CD8-positive, alpha-beta memory T cell (primary cell): ENCODE measurements at regions of chr3 and their contacts with region 1.

Region 1: GRCh38 chr3:38117748-38118420 is 19.0 kb downstream of the ACAA1 start:
- DNase-seq: peak; percentile 51 to 80 (median 57)
- H3K4me3 ChIP-seq: no peak overlapping the region
- H3K4me3 Mint-ChIP-seq: no peak overlapping the region
- H3K27ac ChIP-seq: no peak overlapping the region
- H3K27ac Mint-ChIP-seq: peak overlapping the region in 4 of 8 donors; percentile 51 to 88 (median 63)
- H3K4me1 ChIP-seq: no peaks in the 10 kb centered on the region
- H3K4me1 Mint-ChIP-seq: peaks cover 4 to 11% (median 5%) of the 10 kb centered on the region in 3 donors
- H3K27me3 ChIP-seq: no peaks in the 10 kb centered on the region
- H3K27me3 Mint-ChIP-seq: no peaks in the 10 kb centered on the region

Region 2: GRCh38 chr3:37779289-37780152 is 338.4 kb before region 1 on chr3:
- CTCF ChIA-PET with region 1: no interaction called
- POLR2A ChIA-PET with region 1: no interaction called
- DNase-seq: peak in 1 of 5 donors; percentile 8
- H3K4me3 ChIP-seq: no peak overlapping the region
- H3K4me3 Mint-ChIP-seq: no peak overlapping the region
- H3K27ac ChIP-seq: no peak overlapping the region
- H3K27ac Mint-ChIP-seq: peak overlapping the region in 1 of 8 donors; percentile 54
- H3K4me1 ChIP-seq: no peaks in the 10 kb centered on the region
- H3K4me1 Mint-ChIP-seq: no peaks in the 10 kb centered on the region
- H3K27me3 ChIP-seq: no peaks in the 10 kb centered on the region
- H3K27me3 Mint-ChIP-seq: peaks cover 0 to 3% of the 10 kb centered on the region in 2 donors

Region 3: DNA sequence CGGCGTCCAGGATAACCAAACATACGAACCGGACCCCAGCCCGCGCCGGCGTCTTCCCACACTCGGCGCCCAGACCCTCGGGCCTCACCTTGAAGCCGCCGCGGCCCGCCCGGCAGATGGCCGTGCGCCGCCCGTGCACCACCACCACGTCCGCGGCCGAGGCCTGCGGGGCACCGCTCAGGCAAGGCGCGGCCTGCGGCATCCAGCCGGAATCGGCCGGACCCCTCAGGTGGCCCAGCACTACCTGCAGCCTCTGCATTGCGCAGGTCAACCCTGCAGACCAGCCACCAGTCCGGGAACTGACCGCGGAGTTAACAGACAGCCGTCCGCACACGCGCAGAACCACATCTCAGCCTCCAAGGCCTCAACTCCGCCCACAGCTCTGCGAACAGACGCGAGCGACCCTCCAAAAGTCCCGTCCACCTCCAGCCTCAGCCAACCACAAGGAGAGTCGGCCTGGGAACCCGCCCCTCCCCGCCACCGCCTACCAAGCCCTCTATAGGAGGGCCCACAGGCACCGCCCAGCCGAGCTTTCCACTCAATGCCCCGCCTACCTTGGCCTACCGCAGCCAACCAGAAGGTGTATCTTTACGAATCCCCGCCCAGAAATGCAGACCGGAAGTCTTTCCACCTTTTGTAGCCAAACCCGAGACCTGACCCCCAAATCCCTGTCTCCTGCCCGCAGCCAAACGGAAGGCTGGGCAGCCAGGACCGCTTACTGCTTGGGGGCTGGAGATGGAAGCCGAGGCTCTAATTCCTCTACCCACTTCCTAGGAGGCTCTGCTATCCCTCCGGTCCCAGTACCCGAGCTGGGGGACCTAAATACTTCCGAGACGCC is 19.1 kb after region 1 on chr3 and contains the start of gene ACAA1:
- CTCF ChIA-PET with region 1: interaction called, 15 read pairs
- POLR2A ChIA-PET with region 1: no interaction called
- DNase-seq: peak; percentile 95 to 98 (median 96)
- H3K4me3 ChIP-seq: peak within 1 kb of the TSS; percentile 97
- H3K4me3 Mint-ChIP-seq: peak within 1 kb of the TSS; percentile 87 to 99 (median 95)
- H3K27ac ChIP-seq: peak within 1 kb of the TSS; percentile 89
- H3K27ac Mint-ChIP-seq: peak within 1 kb of the TSS; percentile 89 to 100 (median 96)
- H3K4me1 ChIP-seq: peaks cover 37% of the 10 kb centered on the region
- H3K4me1 Mint-ChIP-seq: peaks cover 66 to 85% (median 84%) of the 10 kb centered on the region in 3 donors
- H3K27me3 ChIP-seq: no peaks in the 10 kb centered on the region
- H3K27me3 Mint-ChIP-seq: no peaks in the 10 kb centered on the region
- total RNA-seq, gene ACAA1: 67.1 to 67.4 TPM

Region 4: DNA sequence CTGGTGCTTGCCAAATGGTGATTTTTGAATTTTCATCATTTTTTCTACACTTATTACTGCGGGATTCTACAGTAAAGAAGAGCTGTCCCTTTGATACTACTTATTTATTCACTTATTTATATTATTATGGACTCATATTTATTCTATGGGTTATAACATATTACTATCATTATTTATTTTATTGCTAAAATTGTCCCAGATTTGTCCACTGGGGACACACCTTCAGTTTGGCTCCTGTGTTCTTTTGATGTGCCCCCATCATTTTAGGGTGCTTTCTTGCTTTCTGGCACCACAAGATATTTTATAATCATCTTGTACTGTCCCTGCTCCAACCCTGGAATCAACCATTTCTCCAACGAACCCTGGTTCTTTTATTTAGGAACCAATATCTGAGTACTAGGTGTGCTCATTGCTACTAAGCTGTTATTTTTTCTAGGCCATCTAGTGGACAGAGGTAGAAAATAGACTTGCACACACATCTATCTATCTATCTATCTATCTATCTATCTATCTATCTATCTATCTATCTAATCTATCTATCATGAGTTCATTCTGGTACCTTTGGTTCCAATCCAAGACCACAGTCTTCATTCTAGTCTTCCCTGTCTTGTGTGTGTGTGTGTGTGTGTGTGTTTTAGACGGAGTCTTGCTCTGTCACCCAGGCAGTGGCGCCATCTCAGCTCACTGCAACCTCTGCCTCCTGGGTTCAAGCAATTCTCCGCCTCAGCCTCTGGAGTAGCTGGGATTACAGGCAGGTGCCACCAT is 180.2 kb after region 1 on chr3:
- CTCF ChIA-PET with region 1: interaction called, 31 read pairs
- POLR2A ChIA-PET with region 1: no interaction called
- DNase-seq: no peak
- H3K4me3 ChIP-seq: no peak overlapping the region
- H3K4me3 Mint-ChIP-seq: no peak overlapping the region
- H3K27ac ChIP-seq: no peak overlapping the region
- H3K27ac Mint-ChIP-seq: no peak overlapping the region
- H3K4me1 ChIP-seq: no peaks in the 10 kb centered on the region
- H3K4me1 Mint-ChIP-seq: no peaks in the 10 kb centered on the region
- H3K27me3 ChIP-seq: no peaks in the 10 kb centered on the region
- H3K27me3 Mint-ChIP-seq: peaks cover 4 to 24% of the 10 kb centered on the region in 2 donors

Region 5: GRCh38 chr3:38479431-38480092 is 361.7 kb after region 1 on chr3:
- CTCF ChIA-PET with region 1: interaction called, 22 read pairs
- POLR2A ChIA-PET with region 1: no interaction called
- DNase-seq: peak in 4 of 5 donors; percentile 16 to 63 (median 36)
- H3K4me3 ChIP-seq: no peak overlapping the region
- H3K4me3 Mint-ChIP-seq: no peak overlapping the region
- H3K27ac ChIP-seq: no peak overlapping the region
- H3K27ac Mint-ChIP-seq: peak overlapping the region in 4 of 8 donors; percentile 24 to 90 (median 34)
- H3K4me1 ChIP-seq: no peaks in the 10 kb centered on the region
- H3K4me1 Mint-ChIP-seq: peaks cover 1 to 2% (median 1%) of the 10 kb centered on the region in 3 donors
- H3K27me3 ChIP-seq: no peaks in the 10 kb centered on the region
- H3K27me3 Mint-ChIP-seq: no peaks in the 10 kb centered on the region